PC-3 (cell line): ENCODE measurements at regions of chr7 and their contacts with region 1.

Region 1: DNA sequence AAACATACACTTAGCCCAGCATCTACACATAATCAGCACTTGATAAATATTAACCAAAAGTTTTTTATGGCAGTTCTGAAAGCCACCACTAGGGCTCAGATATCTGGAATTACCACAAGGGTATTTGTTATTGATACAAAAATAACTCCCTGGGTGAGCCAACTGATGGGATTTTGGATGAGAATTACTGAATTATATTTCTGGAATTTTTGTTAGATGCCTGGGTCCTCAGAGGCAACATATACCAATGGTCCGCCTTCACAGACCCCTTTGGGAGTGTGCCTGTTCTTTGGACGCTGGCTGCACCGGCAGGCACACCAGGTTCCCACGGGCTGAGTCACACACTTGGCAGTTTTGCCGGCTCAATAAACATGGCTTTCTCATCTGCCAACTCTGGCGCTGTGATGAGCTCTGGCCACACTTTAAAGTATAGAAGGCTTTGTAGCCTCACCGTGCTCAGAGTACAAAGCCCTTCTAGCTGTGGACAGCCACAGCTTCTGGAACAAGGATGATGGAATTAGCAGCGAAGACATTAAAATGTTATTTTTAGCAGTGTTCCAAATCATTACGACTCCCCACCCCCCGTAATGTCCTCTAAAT is 24.5 kb upstream of the EEPD1 start:
- DNase-seq: peak; percentile 96
- ATAC-seq: peak; percentile 89
- H3K4me3 ChIP-seq: peak overlapping the region; percentile 56
- H3K27ac ChIP-seq: peak overlapping the region; percentile 97
- H3K4me1 ChIP-seq: peaks cover 19% of the 10 kb centered on the region
- H3K27me3 ChIP-seq: no peaks in the 10 kb centered on the region
- CTCF ChIP-seq: peak; percentile 88

Region 2: DNA sequence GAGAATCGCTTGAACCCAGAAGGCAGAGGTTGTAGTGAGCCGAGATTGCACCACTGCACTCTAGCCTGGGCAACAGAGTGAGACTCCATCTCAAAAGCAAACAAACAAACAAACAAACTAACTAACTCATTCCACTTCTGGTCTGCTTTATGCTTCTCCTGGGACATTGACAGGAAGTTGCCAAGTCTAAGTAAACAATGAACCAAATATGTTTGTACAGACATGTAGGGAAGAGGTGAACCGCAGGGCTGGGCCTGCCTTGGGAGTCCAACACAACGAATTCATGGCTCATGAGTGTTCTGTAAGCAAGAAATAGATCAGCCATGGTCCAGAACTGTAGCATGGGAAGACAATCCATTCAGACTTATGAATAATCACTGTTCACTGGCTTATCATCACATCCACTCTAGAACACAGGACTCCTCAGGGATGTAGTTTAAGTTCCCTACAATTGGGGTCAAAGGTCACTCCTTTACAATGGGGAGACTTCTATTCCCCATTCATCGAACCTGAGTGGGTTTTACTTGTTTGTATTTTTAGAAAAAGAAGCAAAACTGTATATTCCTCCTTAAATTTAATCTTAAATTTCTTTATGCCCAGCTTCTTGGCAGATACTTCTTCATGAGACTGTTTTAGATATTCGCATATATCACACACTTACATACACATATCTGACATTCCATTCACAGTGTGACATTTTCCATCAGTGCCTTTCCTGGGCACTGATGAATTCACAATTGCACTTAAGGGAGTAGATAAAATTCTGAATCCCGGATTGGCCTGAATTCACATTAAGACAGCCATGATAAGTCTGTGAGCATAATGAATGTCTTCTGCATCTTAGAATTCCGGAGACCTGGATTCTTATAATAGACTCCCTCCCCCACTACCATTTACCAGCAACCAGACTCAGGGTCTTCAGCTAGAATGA is 134.6 kb before region 1 on chr7:
- CTCF ChIA-PET with region 1: no interaction called
- POLR2A ChIA-PET with region 1: interaction called, 5 read pairs
- intact Hi-C with region 1: loop called (anchors 1 kb)
- DNase-seq: peak; percentile 94
- ATAC-seq: peak; percentile 75
- H3K4me3 ChIP-seq: no peak overlapping the region
- H3K27ac ChIP-seq: peak overlapping the region; percentile 87
- H3K4me1 ChIP-seq: peaks cover 29% of the 10 kb centered on the region
- H3K27me3 ChIP-seq: no peaks in the 10 kb centered on the region
- CTCF ChIP-seq: no peak

Region 3: DNA sequence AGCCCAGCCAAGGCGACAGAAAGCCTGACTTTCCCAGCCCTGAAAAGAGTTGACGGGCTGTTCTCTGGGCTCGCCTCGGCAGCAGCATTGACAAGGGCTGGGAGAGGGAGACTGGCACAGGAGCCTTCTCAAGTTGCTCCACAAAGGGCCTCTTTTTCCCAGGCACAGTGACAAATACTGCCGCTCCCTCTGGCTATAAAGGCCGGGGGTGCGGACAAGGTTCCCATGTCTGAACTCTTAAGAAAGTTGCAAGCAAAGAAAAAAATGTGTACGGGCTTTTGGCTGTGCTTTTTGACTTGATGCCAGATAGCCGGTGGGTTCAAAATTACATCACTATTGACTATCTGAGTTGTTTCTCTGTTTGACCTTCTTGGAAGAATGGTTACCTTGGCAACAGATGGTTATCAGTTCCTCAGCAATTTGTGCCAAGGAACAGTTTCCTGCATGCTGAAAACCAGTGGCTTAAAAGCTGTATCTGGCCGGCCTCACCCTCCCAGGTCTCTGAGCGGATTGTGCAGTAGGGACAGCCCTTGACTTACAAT is 91.4 kb before region 1 on chr7:
- CTCF ChIA-PET with region 1: interaction called, 3 read pairs
- POLR2A ChIA-PET with region 1: interaction called, 3 read pairs
- intact Hi-C with region 1: loop called (anchors 1 kb)
- DNase-seq: peak; percentile 99
- ATAC-seq: peak; percentile 68
- H3K4me3 ChIP-seq: peak overlapping the region; percentile 39
- H3K27ac ChIP-seq: peak overlapping the region; percentile 100
- H3K4me1 ChIP-seq: peaks cover 69% of the 10 kb centered on the region
- H3K27me3 ChIP-seq: no peaks in the 10 kb centered on the region
- CTCF ChIP-seq: no peak

Region 4: GRCh38 chr7:36115448-36116321 is 12.9 kb before region 1 on chr7:
- CTCF ChIA-PET with region 1: interaction called, 11 read pairs
- POLR2A ChIA-PET with region 1: no interaction called
- intact Hi-C with region 1: no loop called
- DNase-seq: peak; percentile 97
- ATAC-seq: peak; percentile 89
- H3K4me3 ChIP-seq: peak overlapping the region; percentile 17; the same call in 1 of the 2 replicates
- H3K27ac ChIP-seq: peak overlapping the region; percentile 95
- H3K4me1 ChIP-seq: peaks cover 51% of the 10 kb centered on the region
- H3K27me3 ChIP-seq: no peaks in the 10 kb centered on the region
- CTCF ChIP-seq: no peak